ENCODE measurements at regions of chr17 and their contacts with region 1.

Region 1: GRCh38 chr17:5706577-5707216 is 122.4 kb upstream of the NLRP1 start:
- DNase-seq: no peak

Region 2: DNA sequence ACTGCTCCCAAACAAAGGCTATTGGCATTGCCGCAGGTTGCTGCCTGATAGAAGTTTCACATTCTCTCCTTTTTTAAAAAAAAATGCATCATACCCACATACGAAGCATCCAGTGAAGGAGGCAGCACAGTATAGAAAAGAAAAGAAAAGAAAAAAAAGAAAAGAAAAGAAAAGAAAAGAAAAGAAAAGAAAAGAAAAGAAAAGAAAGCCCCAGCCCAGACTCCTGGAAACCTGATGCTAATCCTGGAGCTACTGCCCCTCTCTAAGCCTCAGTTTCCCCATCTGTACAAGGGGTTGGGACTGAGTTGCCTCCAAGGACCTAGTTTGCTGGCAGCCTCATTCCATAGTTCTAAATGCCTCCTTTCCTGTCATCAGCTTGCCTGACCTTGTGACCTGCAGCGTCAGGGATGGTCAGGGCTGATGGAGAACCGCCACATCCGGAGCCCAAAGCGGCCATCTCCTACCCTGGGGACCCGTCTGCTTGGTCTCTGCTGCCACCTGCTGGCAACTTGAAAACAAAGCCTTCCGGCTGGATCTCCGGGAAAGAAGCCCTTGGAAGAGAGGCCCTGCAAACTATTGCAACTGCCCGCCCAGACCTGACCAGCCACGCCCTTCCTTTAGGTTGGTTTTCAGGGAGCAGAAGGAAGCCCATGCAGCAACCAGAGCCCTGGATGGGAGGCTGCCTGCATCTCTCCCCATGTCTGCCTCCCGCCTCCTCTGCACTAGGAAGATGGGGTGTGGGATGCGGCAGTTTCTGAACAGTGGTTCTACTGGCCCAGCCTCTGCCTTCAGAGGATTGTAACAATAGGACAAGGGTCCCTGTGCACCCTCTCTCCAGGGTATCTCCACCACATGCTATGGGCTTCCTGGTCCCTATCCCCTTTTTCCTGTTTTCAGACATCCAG is 715.3 kb after region 1 on chr17:
- intact Hi-C with region 1: loop called (anchors 5 kb)
- DNase-seq: peak; percentile 90